Posterior vena cava (tissue), 2 donors: ENCODE measurements at regions of chr4 and their contacts with region 1.

Region 1: GRCh38 chr4:124631760-124632159 is 80.8 kb downstream of the ANKRD50 start:
- DNase-seq: no peak

Region 2: GRCh38 chr4:124573076-124573475 is 58.7 kb before region 1 on chr4:
- intact Hi-C with region 1: no loop called
- DNase-seq: no peak

Region 3: DNA sequence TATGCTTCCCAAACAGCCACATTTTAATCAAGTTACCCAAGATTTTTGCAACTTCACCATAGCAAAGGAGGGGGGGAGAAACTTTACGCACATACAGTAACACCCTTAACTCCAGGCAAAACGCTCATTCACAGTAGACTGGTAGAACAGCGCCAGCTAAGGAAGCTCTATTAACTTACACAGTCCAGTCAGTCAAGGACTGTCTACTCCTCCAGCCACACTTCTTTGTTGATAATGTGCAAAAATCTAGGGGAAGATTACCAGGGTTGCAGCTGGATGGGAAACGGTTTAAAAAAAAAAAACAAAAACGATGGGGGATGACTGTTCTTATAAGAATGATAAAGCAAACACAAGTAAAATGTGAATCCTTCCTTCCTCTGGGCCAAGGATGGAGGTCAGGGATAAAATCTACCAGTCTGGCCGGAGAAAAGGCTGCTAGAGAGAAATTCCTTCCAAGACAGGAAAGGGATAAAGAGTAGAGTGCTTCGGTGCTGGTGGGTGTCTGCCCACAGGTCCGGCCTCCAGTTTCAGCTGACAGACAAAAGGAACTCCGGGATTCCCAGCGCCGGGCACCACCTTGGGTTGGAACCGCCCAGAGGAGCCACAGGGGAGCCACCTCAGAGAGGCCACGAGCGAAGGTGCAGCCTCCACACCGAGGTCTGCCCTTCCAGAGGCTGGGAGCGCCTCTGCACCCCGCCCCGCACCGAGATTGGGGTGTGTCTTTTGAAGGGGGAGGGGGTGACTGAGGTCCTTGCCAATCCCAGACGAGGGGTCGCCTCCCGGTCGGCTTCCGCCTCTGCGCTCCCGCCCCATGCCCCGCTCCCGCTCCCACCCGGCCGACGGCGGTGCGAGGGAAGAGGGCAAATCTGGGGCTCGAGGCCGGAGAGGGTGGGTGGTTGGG is 80.0 kb after region 1 on chr4:
- intact Hi-C with region 1: loop called in 1 of 2 experiments (anchors 2 kb)
- DNase-seq: peak; percentile 82